GM12878 (cell line): ENCODE measurements at regions of chr3 and their contacts with region 1.

Region 1: DNA sequence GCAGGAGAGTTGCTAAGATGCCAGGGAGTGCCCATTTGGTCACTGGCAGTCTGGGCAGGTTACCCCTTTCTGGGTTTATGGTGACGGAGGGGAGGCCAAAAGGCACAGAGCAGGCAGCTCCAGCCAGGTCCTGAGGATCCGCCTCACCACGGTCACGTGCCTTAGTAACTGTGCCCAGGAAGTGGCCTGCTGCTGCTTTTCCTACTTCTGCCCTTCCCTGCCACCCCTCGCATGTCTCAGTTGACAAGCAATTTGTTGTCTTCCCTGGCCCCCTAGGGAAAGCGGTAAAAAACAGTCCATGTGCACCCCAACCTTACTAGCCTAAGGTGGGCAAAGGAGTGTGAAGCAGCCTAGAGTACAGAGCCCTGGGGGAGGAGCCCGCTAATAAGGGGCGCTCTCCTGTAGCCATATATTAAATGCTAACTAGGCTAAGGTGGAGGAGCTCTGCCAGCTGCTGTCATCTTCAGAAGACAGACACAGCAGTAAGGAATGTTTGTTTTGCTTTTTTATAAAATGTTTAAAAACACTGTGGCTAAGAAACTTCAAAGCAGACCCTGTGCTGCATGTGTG is 9.1 kb upstream of the LIPH start:
- DNase-seq: no peak
- ATAC-seq: no peak
- H3K4me3 ChIP-seq: no peak overlapping the region
- H3K27ac ChIP-seq: no peak overlapping the region
- H3K4me1 ChIP-seq: peaks cover 18% of the 10 kb centered on the region
- H3K27me3 ChIP-seq: no peaks in the 10 kb centered on the region
- CTCF ChIP-seq: no peak
- EP300 ChIP-seq: no peak
- POLR2A ChIP-seq: no peak
- RAD21 ChIP-seq: no peak

Region 2: GRCh38 chr3:185353823-185354614 is 207.4 kb before region 1 on chr3:
- CTCF ChIA-PET with region 1: interaction called, 10 read pairs
- POLR2A ChIA-PET with region 1: interaction called, 3 read pairs
- RAD21 ChIA-PET with region 1: interaction called, 6 read pairs
- SMC1A ChIA-PET with region 1: interaction called, 14 read pairs
- in situ Hi-C with region 1: no loop called
- intact Hi-C with region 1: loop called (anchors 5 kb)
- DNase-seq: peak; percentile 75
- ATAC-seq: peak; percentile 100
- H3K4me3 ChIP-seq: no peak overlapping the region
- H3K27ac ChIP-seq: no peak overlapping the region
- H3K4me1 ChIP-seq: no peaks in the 10 kb centered on the region
- H3K27me3 ChIP-seq: no peaks in the 10 kb centered on the region
- CTCF ChIP-seq: peak; percentile 60 to 77 (median 75)
- EP300 ChIP-seq: no peak
- POLR2A ChIP-seq: no peak
- RAD21 ChIP-seq: peak; percentile 75

Region 3: GRCh38 chr3:185402561-185402960 is 158.9 kb before region 1 on chr3:
- CTCF ChIA-PET with region 1: no interaction called
- POLR2A ChIA-PET with region 1: no interaction called
- RAD21 ChIA-PET with region 1: no interaction called
- SMC1A ChIA-PET with region 1: no interaction called
- in situ Hi-C with region 1: no loop called
- intact Hi-C with region 1: no loop called
- DNase-seq: no peak
- ATAC-seq: no peak
- H3K4me3 ChIP-seq: no peak overlapping the region
- H3K27ac ChIP-seq: no peak overlapping the region
- H3K4me1 ChIP-seq: no peaks in the 10 kb centered on the region
- H3K27me3 ChIP-seq: no peaks in the 10 kb centered on the region
- CTCF ChIP-seq: no peak
- EP300 ChIP-seq: no peak
- POLR2A ChIP-seq: no peak
- RAD21 ChIP-seq: no peak

Region 4: DNA sequence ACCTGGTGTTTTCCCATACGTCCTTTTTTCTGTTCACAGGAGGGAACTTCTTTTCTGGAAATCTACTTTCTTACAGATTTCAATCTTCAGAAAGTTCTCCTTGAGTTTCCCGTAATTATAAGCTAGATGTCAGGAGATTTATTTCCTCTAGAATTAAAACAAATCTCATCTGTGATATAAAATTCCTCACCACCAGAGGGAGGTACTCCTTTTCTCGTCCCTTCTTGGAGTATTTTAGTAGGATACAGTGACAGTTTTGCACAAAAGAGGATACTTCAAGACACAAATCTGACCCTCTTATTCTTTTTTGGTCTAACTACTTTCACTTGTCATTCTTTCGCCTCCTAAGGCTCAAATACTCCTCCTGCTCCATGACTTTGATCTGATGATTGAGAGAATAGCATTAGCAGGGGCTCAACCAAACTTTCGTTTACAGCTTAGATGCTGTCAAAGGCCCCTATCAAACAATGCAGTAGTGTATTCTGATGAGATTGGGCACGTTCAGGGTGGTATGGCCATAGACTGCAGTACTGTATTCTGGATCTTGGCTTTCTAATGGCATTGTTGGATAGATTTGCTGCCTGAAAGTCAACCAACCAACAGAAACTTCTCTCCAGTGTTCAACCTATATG is 100.6 kb before region 1 on chr3:
- CTCF ChIA-PET with region 1: interaction called, 40 read pairs
- POLR2A ChIA-PET with region 1: no interaction called
- RAD21 ChIA-PET with region 1: interaction called, 11 read pairs
- SMC1A ChIA-PET with region 1: interaction called, 17 read pairs
- in situ Hi-C with region 1: no loop called
- intact Hi-C with region 1: no loop called
- DNase-seq: no peak
- ATAC-seq: no peak
- H3K4me3 ChIP-seq: no peak overlapping the region
- H3K27ac ChIP-seq: no peak overlapping the region
- H3K4me1 ChIP-seq: no peaks in the 10 kb centered on the region
- H3K27me3 ChIP-seq: no peaks in the 10 kb centered on the region
- CTCF ChIP-seq: peak; percentile 11 to 28 (median 23); a peak in 2 of 6 replicates
- EP300 ChIP-seq: no peak
- POLR2A ChIP-seq: no peak
- RAD21 ChIP-seq: no peak

Region 5: DNA sequence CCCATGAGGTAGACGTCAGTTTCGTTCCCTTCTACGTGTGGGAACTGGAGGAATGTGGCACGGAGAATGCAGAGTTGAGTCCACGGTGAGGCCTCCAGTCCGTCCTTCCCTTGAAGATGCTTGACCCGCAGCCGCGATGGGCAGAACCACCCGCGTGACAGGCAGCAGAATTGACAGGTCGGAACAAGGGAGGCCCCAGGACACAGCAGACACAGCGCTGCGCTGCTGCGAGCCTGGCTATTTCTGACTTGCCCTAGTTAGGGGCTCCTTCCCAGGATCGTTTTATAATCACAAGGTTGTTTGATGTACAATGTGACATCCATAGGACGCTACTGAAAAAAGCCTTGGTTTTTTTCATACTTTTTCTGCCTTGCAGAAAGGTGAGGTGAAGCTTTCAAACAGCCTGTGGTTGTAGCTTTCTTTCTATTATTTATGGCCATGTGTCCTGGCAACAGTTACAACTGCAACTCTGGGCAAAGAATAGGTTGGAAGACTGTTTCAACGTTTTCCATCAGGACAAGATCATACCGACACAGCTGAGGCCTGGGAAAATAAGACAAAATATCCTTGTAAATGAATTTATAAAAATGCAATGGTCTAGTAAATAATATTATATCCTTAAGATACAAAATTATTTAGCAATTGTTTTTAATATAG is 53.0 kb before region 1 on chr3:
- CTCF ChIA-PET with region 1: no interaction called
- POLR2A ChIA-PET with region 1: no interaction called
- RAD21 ChIA-PET with region 1: no interaction called
- SMC1A ChIA-PET with region 1: interaction called, 11 read pairs
- in situ Hi-C with region 1: no loop called
- intact Hi-C with region 1: no loop called
- DNase-seq: no peak
- ATAC-seq: no peak
- H3K4me3 ChIP-seq: no peak overlapping the region
- H3K27ac ChIP-seq: no peak overlapping the region
- H3K4me1 ChIP-seq: peaks cover 3% of the 10 kb centered on the region; the same call in 1 of the 2 replicates
- H3K27me3 ChIP-seq: no peaks in the 10 kb centered on the region
- CTCF ChIP-seq: no peak
- EP300 ChIP-seq: no peak
- POLR2A ChIP-seq: no peak
- RAD21 ChIP-seq: no peak

Region 6: DNA sequence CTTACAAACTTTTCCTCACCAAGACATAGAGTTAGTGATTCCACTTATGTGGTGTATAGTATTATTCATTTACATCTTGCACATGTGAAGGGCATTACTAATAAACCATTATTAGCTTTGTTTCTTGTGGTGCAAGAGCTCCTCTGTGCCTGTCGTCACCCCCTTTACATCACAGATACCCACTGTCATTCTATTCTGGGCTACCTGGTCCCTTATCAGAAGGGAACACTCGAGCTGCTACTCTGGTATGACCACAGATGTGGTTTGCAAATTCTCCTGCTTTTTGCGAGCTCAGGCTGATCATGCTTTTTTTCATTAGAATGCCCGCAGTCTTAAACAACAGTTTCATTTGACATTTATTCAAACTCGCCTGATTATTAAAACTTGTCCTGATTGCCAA is 10.7 kb after region 1 on chr3:
- CTCF ChIA-PET with region 1: interaction called, 56 read pairs
- POLR2A ChIA-PET with region 1: no interaction called
- RAD21 ChIA-PET with region 1: interaction called, 13 read pairs
- SMC1A ChIA-PET with region 1: interaction called, 23 read pairs
- in situ Hi-C with region 1: no loop called
- intact Hi-C with region 1: no loop called
- DNase-seq: no peak
- ATAC-seq: no peak
- H3K4me3 ChIP-seq: no peak overlapping the region
- H3K27ac ChIP-seq: no peak overlapping the region
- H3K4me1 ChIP-seq: peaks cover 3% of the 10 kb centered on the region; the same call in 1 of the 2 replicates
- H3K27me3 ChIP-seq: no peaks in the 10 kb centered on the region
- CTCF ChIP-seq: no peak
- EP300 ChIP-seq: no peak
- POLR2A ChIP-seq: no peak
- RAD21 ChIP-seq: no peak

Region 7: GRCh38 chr3:185837414-185837813 is 276.0 kb after region 1 on chr3:
- CTCF ChIA-PET with region 1: no interaction called
- POLR2A ChIA-PET with region 1: no interaction called
- RAD21 ChIA-PET with region 1: no interaction called
- SMC1A ChIA-PET with region 1: no interaction called
- in situ Hi-C with region 1: no loop called
- intact Hi-C with region 1: no loop called
- DNase-seq: no peak
- ATAC-seq: no peak
- H3K4me3 ChIP-seq: no peak overlapping the region
- H3K27ac ChIP-seq: no peak overlapping the region
- H3K4me1 ChIP-seq: no peaks in the 10 kb centered on the region
- H3K27me3 ChIP-seq: no peaks in the 10 kb centered on the region
- CTCF ChIP-seq: no peak
- EP300 ChIP-seq: no peak
- POLR2A ChIP-seq: no peak
- RAD21 ChIP-seq: no peak